A673 (cell line): ENCODE measurements at regions of chr12 and their contacts with region 1.

Region 1: GRCh38 chr12:118376089-118377020 is at the start of gene SUDS3:
- DNase-seq: peak; percentile 88
- H3K4me3 ChIP-seq: peak within 1 kb of the TSS; percentile 94
- H3K27ac ChIP-seq: peak within 1 kb of the TSS; percentile 99
- H3K4me1 ChIP-seq: peaks cover 18% of the 10 kb centered on the region
- H3K27me3 ChIP-seq: no peaks in the 10 kb centered on the region
- CTCF ChIP-seq: peak; percentile 99
- total RNA-seq, gene SUDS3: 47.8 and 50.0 TPM in 2 replicates

Region 2: GRCh38 chr12:118061011-118061875 is 315.1 kb before region 1 on chr12 and contains the start of gene WSB2:
- CTCF ChIA-PET with region 1: no interaction called
- POLR2A ChIA-PET with region 1: no interaction called
- intact Hi-C with region 1: loop called (anchors 5 kb)
- DNase-seq: peak; percentile 76
- H3K4me3 ChIP-seq: peak within 1 kb of the TSS; percentile 72
- H3K27ac ChIP-seq: peak within 1 kb of the TSS; percentile 92
- H3K4me1 ChIP-seq: peaks cover 23% of the 10 kb centered on the region
- H3K27me3 ChIP-seq: no peaks in the 10 kb centered on the region
- CTCF ChIP-seq: no peak
- total RNA-seq, gene WSB2: 97.9 and 122 TPM in 2 replicates

Region 3: DNA sequence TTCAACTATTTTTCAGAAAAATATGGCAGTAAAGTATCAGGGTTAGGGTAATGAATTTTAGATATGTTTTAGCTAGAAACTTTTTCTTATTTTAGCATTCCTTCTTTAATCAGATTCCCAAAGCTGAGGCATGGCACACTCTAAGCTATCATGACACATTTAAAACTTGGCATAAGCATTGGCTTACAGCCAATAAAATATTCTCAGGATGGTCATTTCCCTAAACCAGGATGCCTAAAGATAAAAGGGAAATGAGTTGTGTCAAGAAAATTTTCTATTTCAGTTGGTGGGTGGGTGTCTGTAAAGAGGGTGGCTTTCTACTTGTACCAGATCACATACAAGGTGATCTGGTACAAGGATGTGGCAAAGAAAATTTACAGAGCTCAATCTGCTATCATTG is 192.7 kb before region 1 on chr12:
- CTCF ChIA-PET with region 1: interaction called, 7 read pairs
- POLR2A ChIA-PET with region 1: no interaction called
- intact Hi-C with region 1: loop called (anchors 1 kb)
- DNase-seq: no peak
- H3K4me3 ChIP-seq: no peak overlapping the region
- H3K27ac ChIP-seq: no peak overlapping the region
- H3K4me1 ChIP-seq: no peaks in the 10 kb centered on the region
- H3K27me3 ChIP-seq: no peaks in the 10 kb centered on the region
- CTCF ChIP-seq: no peak

Region 4: GRCh38 chr12:118330421-118331018 is 45.8 kb before region 1 on chr12:
- CTCF ChIA-PET with region 1: no interaction called
- POLR2A ChIA-PET with region 1: no interaction called
- intact Hi-C with region 1: loop called (anchors 2 kb)
- DNase-seq: peak; percentile 76
- H3K4me3 ChIP-seq: no peak overlapping the region
- H3K27ac ChIP-seq: peak overlapping the region; percentile 70
- H3K4me1 ChIP-seq: peaks cover 73% of the 10 kb centered on the region
- H3K27me3 ChIP-seq: no peaks in the 10 kb centered on the region
- CTCF ChIP-seq: no peak

Region 5: GRCh38 chr12:118342090-118342489 is 34.3 kb before region 1 on chr12:
- CTCF ChIA-PET with region 1: no interaction called
- POLR2A ChIA-PET with region 1: no interaction called
- intact Hi-C with region 1: no loop called
- DNase-seq: no peak
- H3K4me3 ChIP-seq: no peak overlapping the region
- H3K27ac ChIP-seq: peak overlapping the region; percentile 34
- H3K4me1 ChIP-seq: peaks cover 60% of the 10 kb centered on the region
- H3K27me3 ChIP-seq: no peaks in the 10 kb centered on the region
- CTCF ChIP-seq: no peak